ENCODE measurements at regions of chr10 and their contacts with region 1.

Region 1: DNA sequence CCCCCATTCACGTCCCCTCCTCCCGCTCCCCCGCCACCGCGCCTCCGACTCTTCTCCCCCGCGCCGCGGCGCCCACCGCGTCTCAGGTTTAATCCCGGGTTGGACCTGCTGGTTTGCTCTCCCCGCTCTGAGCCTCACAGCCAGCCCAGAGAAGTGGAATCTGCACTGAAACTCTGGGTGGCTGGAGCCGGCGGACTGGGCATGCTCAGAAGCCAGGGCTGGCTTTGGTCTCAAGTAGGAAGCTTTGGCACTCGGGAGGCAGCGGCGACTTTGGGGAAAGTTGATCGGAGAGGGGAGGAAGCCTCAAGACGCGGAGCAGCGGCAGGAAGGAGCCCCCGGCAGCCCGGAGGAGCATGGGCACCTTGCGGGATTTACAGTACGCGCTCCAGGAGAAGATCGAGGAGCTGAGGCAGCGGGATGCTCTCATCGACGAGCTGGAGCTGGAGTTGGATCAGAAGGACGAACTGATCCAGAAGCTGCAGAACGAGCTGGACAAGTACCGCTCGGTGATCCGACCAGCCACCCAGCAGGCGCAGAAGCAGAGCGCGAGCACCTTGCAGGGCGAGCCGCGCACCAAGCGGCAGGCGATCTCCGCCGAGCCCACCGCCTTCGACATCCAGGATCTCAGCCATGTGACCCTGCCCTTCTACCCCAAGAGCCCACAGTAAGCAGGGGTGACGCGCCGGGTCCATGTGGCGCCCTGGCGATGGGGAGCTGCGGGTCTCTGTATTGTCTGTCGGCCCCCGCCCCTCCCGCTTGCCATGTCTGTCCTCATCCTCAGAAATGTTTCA is at the start of gene PRKG1:
- DNase-seq: peak; percentile 86
- ATAC-seq: peak; percentile 92 to 98
- total RNA-seq, gene PRKG1: 31.5 to 34.7 TPM

Region 2: GRCh38 chr10:51244748-51245490 is 170.5 kb after region 1 on chr10:
- intact Hi-C with region 1: loop called in 1 of 2 experiments (anchors 5 kb)
- DNase-seq: no peak
- ATAC-seq: peak; percentile 92 to 97

Region 3: GRCh38 chr10:51422311-51423120 is 348.1 kb after region 1 on chr10:
- intact Hi-C with region 1: loop called in 1 of 2 experiments (anchors 5 kb)
- DNase-seq: peak; percentile 61
- ATAC-seq: peak; percentile 70 to 74

Measured in left cardiac atrium (tissue), 4 donors.